Activated T-helper 1 cell treated with anti-CD3 and anti-CD28 coated beads, Interleukin-12 subunit alpha, Interleukin-12 subunit beta, Interleukin-2, Interleukin-4 antibody, amounts not matched to agents 30 ng/mL and 10 ng/mL and 1 ng/mL, durations not matched to agents 14 hours and 24 hours and 36 hours (primary cell): ENCODE measurements at regions of chr4 and their contacts with region 1.

Region 1: GRCh38 chr4:146105464-146105863 is 70.1 kb upstream of the LSM6 start:
- DNase-seq: no peak
- H3K4me3 Mint-ChIP-seq: no peak overlapping the region
- H3K27ac Mint-ChIP-seq: no peak overlapping the region
- H3K4me1 Mint-ChIP-seq: peaks cover 12% of the 10 kb centered on the region
- H3K27me3 Mint-ChIP-seq: peaks cover 6% of the 10 kb centered on the region

Region 2: GRCh38 chr4:145912376-145912775 is 193.1 kb before region 1 on chr4:
- intact Hi-C with region 1: no loop called
- DNase-seq: no peak
- H3K4me3 Mint-ChIP-seq: no peak overlapping the region
- H3K27ac Mint-ChIP-seq: no peak overlapping the region
- H3K4me1 Mint-ChIP-seq: no peaks in the 10 kb centered on the region
- H3K27me3 Mint-ChIP-seq: no peaks in the 10 kb centered on the region

Region 3: GRCh38 chr4:146159384-146160058 is 54.1 kb after region 1 on chr4:
- intact Hi-C with region 1: loop called (anchors 5 kb)
- DNase-seq: no peak
- H3K4me3 Mint-ChIP-seq: no peak overlapping the region
- H3K27ac Mint-ChIP-seq: peak overlapping the region; percentile 1
- H3K4me1 Mint-ChIP-seq: peaks cover 7% of the 10 kb centered on the region
- H3K27me3 Mint-ChIP-seq: peaks cover 3% of the 10 kb centered on the region